Colonic mucosa (tissue), 4 donors: ENCODE measurements at regions of chr4 and their contacts with region 1.

Region 1: GRCh38 chr4:69322055-69322454 is 41.8 kb downstream of the UGT2B28 start:
- DNase-seq: no peak
- H3K4me3 ChIP-seq: no peak overlapping the region
- H3K27ac ChIP-seq: no peak overlapping the region
- H3K4me1 ChIP-seq: no peaks in the 10 kb centered on the region
- H3K27me3 ChIP-seq: no peaks in the 10 kb centered on the region
- CTCF ChIP-seq: no peak

Region 2: GRCh38 chr4:69066945-69067344 is 255.1 kb before region 1 on chr4:
- intact Hi-C with region 1: no loop called
- DNase-seq: no peak
- H3K4me3 ChIP-seq: no peak overlapping the region
- H3K27ac ChIP-seq: no peak overlapping the region
- H3K4me1 ChIP-seq: no peaks in the 10 kb centered on the region
- H3K27me3 ChIP-seq: no peaks in the 10 kb centered on the region
- CTCF ChIP-seq: no peak

Region 3: DNA sequence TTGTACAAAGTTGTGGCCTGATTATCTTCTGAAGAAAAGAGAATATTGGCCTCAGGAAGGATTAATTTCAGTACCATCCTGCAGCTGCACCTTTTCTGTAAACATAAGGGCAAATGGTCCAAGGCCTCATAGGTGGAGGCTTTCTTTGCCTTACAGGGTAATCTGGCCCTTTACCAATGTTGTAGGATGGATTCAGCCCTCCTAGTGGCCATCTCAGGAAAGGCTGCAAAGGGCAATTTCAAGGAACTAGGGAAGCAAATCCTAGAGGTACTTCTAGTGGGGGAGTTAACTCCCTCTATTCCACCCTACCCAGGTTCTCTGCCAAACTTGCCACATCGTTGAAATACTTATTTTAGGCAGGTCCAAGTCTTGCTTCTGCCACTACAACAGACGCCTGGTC is 165.1 kb before region 1 on chr4:
- intact Hi-C with region 1: no loop called
- DNase-seq: no peak
- H3K4me3 ChIP-seq: no peak overlapping the region
- H3K27ac ChIP-seq: no peak overlapping the region
- H3K4me1 ChIP-seq: no peaks in the 10 kb centered on the region
- H3K27me3 ChIP-seq: no peaks in the 10 kb centered on the region
- CTCF ChIP-seq: no peak

Region 4: GRCh38 chr4:69497076-69497475 is 175.0 kb after region 1 on chr4:
- intact Hi-C with region 1: no loop called
- DNase-seq: no peak
- H3K4me3 ChIP-seq: no peak overlapping the region
- H3K27ac ChIP-seq: no peak overlapping the region
- H3K4me1 ChIP-seq: no peaks in the 10 kb centered on the region
- H3K27me3 ChIP-seq: no peaks in the 10 kb centered on the region
- CTCF ChIP-seq: no peak

Region 5: DNA sequence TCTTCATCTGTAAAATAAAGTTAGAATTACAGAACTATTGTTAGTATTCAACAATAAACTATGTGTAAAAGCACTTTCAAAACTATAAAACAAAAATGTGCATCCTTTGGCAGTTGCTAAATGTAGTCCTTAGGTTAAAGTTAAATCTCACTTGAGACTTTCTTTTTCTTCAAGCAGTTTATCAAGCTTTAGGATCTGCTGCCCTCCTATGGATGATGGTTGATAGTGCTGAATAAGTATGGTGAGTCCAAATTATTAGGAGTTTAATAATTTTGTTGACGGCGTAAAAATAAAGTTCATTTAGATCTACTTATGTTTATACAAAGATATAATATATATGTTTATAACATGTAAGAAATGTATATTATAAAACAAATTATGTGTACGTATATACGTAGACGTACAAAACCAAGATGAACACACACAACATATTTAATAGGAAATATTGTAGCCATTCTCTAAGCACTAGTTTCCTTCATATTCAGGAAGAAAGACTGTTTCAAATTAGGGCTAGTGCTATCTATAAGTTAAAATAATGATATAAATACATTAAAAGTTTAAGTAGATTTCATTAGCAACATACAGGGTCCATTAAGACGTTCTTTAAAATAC is 295.1 kb after region 1 on chr4:
- intact Hi-C with region 1: loop called (anchors 5 kb)
- DNase-seq: no peak
- H3K4me3 ChIP-seq: no peak overlapping the region
- H3K27ac ChIP-seq: no peak overlapping the region
- H3K4me1 ChIP-seq: no peaks in the 10 kb centered on the region
- H3K27me3 ChIP-seq: no peaks in the 10 kb centered on the region
- CTCF ChIP-seq: no peak